Activated B cell treated with CpG ODN at 0.5 μM for 24 hours (primary cell): ENCODE measurements at regions of chr6 and their contacts with region 1.

Region 1: DNA sequence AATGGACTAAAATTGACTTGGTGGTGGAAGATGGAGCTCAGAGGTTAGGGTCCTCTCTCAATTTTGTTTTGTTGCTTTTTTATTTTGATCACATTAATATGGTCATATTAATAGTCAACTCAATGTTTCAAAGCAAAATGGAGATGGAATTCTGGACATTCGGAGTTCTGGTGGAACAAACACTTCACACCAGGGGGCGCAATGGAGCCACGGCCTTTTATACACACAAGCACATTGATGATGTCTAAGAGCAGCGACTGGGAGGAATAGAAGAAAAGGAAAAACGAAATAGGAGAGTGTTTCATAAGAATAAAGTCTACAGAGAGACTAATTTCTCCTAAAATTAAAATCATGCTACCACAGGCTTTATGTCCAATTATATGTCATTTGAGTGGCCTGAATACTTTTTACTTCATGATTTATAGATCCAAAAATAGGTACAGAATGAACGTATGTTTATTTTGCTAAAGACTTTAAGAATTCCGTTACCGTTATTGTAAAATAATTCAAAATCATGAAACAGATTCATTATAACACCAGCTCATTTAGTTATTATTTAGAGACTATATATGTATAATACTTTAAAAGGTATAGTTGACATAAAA is 197.6 kb upstream of the SASH1 start:
- DNase-seq: peak; percentile 20
- ATAC-seq: no peak
- H3K4me3 Mint-ChIP-seq: no peak overlapping the region
- H3K27ac Mint-ChIP-seq: no peak overlapping the region
- H3K4me1 Mint-ChIP-seq: peaks cover 4% of the 10 kb centered on the region
- H3K27me3 Mint-ChIP-seq: peaks cover 6% of the 10 kb centered on the region
- CTCF ChIP-seq: no peak

Region 2: GRCh38 chr6:148250975-148251685 is 106.1 kb after region 1 on chr6:
- CTCF ChIA-PET with region 1: no interaction called
- POLR2A ChIA-PET with region 1: no interaction called
- intact Hi-C with region 1: loop called (anchors 1 kb)
- DNase-seq: no peak
- ATAC-seq: no peak
- H3K4me3 Mint-ChIP-seq: no peak overlapping the region
- H3K27ac Mint-ChIP-seq: no peak overlapping the region
- H3K4me1 Mint-ChIP-seq: no peaks in the 10 kb centered on the region
- H3K27me3 Mint-ChIP-seq: peaks cover 2% of the 10 kb centered on the region
- CTCF ChIP-seq: no peak

Region 3: GRCh38 chr6:148528292-148528691 is 383.3 kb after region 1 on chr6:
- CTCF ChIA-PET with region 1: interaction called, 3 read pairs
- POLR2A ChIA-PET with region 1: no interaction called
- intact Hi-C with region 1: loop called (anchors 1 kb)
- DNase-seq: no peak
- ATAC-seq: no peak
- H3K4me3 Mint-ChIP-seq: no peak overlapping the region
- H3K27ac Mint-ChIP-seq: no peak overlapping the region
- H3K4me1 Mint-ChIP-seq: peaks cover 27% of the 10 kb centered on the region
- H3K27me3 Mint-ChIP-seq: no peaks in the 10 kb centered on the region
- CTCF ChIP-seq: no peak